A673 (cell line): ENCODE measurements at regions of chr10 and their contacts with region 1.

Region 1: GRCh38 chr10:32279795-32280194 is 67.2 kb downstream of the EPC1 start:
- DNase-seq: no peak
- H3K4me3 ChIP-seq: no peak overlapping the region
- H3K27ac ChIP-seq: no peak overlapping the region
- H3K4me1 ChIP-seq: peaks cover 3% of the 10 kb centered on the region
- H3K27me3 ChIP-seq: no peaks in the 10 kb centered on the region
- CTCF ChIP-seq: no peak

Region 2: GRCh38 chr10:31954410-31955191 is 325.2 kb before region 1 on chr10:
- CTCF ChIA-PET with region 1: no interaction called
- POLR2A ChIA-PET with region 1: interaction called, 12 read pairs
- intact Hi-C with region 1: no loop called
- DNase-seq: no peak
- H3K4me3 ChIP-seq: no peak overlapping the region
- H3K27ac ChIP-seq: no peak overlapping the region
- H3K4me1 ChIP-seq: no peaks in the 10 kb centered on the region
- H3K27me3 ChIP-seq: no peaks in the 10 kb centered on the region
- CTCF ChIP-seq: no peak

Region 3: GRCh38 chr10:32123021-32123420 is 156.8 kb before region 1 on chr10:
- CTCF ChIA-PET with region 1: no interaction called
- POLR2A ChIA-PET with region 1: no interaction called
- intact Hi-C with region 1: no loop called
- DNase-seq: no peak
- H3K4me3 ChIP-seq: no peak overlapping the region
- H3K27ac ChIP-seq: no peak overlapping the region
- H3K4me1 ChIP-seq: no peaks in the 10 kb centered on the region
- H3K27me3 ChIP-seq: no peaks in the 10 kb centered on the region
- CTCF ChIP-seq: no peak